IMR-90 (cell line): ENCODE measurements at regions of chr22 and their contacts with region 1.

Region 1: GRCh38 chr22:25202290-25202921 is 2.7 kb downstream of the CRYBB3 start:
- DNase-seq: peak; percentile 43
- ATAC-seq: peak; percentile 97
- H3K4me3 ChIP-seq: no peak overlapping the region
- H3K27ac ChIP-seq: no peak overlapping the region
- H3K4me1 ChIP-seq: no peaks in the 10 kb centered on the region
- H3K27me3 ChIP-seq: no peaks in the 10 kb centered on the region
- CTCF ChIP-seq: peak; percentile 83
- POLR2A ChIP-seq: no peak
- RAD21 ChIP-seq: peak; percentile 72

Region 2: DNA sequence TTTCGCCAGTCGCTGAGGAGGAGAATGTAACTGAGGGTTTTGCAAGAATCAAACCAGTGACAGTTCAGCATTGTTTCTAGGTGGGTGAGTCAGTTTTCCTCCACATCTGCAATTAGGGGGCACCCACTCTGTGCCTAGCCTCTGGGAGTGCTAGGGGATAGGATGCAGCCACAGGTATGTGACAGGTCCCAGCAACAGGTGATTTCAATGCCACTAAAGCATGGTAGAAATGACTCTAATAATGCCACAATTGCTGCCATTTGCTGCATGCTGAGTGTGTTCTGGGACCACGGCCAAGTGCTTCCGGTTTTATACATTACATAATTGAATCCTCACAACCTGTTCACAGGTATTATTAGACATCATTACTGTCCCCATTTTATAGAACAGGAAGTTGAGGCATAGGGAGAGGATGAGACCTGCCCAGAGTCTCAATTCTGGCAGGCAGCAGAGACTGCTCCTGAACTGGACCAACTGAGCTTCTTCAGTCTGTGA is 17.6 kb after region 1 on chr22:
- CTCF ChIA-PET with region 1: no interaction called
- POLR2A ChIA-PET with region 1: no interaction called
- dilution Hi-C with region 1: no loop called
- in situ Hi-C with region 1: no loop called
- intact Hi-C with region 1: no loop called
- DNase-seq: no peak
- ATAC-seq: no peak
- H3K4me3 ChIP-seq: no peak overlapping the region
- H3K27ac ChIP-seq: no peak overlapping the region
- H3K4me1 ChIP-seq: no peaks in the 10 kb centered on the region
- H3K27me3 ChIP-seq: no peaks in the 10 kb centered on the region; the same call in 1 of the 2 replicates
- CTCF ChIP-seq: no peak
- POLR2A ChIP-seq: no peak
- RAD21 ChIP-seq: no peak

Region 3: DNA sequence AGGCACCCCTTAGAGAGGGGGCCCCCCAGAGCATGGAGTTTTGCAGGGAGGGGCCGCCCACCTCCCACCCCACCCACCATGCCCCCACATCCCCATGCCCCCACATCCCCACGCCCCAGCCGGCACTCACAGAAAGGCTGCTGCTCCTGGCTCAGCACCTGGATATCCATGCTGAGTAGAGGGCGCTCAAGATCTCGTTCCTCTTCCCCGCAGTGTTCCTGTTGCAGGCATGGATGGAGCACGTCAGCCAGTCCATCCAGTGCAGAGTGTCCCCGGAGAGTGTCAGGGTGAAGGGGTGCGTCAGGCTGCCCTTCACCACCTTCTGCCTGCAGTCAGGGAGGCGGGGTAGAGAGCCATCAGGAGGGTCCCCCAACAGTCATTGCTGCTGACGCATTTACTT is 173.3 kb after region 1 on chr22:
- CTCF ChIA-PET with region 1: no interaction called
- POLR2A ChIA-PET with region 1: no interaction called
- dilution Hi-C with region 1: no loop called
- in situ Hi-C with region 1: no loop called
- intact Hi-C with region 1: no loop called
- DNase-seq: no peak
- ATAC-seq: no peak
- H3K4me3 ChIP-seq: no peak overlapping the region
- H3K27ac ChIP-seq: no peak overlapping the region
- H3K4me1 ChIP-seq: no peaks in the 10 kb centered on the region
- H3K27me3 ChIP-seq: no peaks in the 10 kb centered on the region
- CTCF ChIP-seq: no peak
- POLR2A ChIP-seq: no peak
- RAD21 ChIP-seq: no peak

Region 4: DNA sequence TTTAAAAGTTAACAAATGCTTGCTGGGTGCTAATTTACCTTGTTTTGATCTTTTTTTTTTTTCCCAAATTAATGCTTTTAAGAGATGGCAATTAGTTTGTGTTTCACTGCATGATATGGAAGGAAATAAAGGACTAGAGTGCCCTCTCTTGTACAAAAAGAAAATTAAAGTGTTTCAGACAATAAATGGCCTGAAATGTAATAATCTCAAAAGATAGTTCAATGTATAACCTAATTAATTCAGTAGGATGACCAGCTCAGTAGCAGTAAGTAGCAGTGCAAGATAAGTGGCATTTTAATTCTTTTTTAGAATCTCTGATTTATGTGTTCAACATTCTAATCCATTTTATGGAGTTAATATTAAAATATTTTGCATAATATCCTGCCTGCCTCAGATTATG is 499.6 kb after region 1 on chr22:
- CTCF ChIA-PET with region 1: no interaction called
- POLR2A ChIA-PET with region 1: no interaction called
- dilution Hi-C with region 1: no loop called
- in situ Hi-C with region 1: no loop called
- intact Hi-C with region 1: loop called (anchors 1 kb)
- DNase-seq: peak; percentile 29
- ATAC-seq: peak; percentile 56; the same call in 1 of the 2 replicates
- H3K4me3 ChIP-seq: no peak overlapping the region
- H3K27ac ChIP-seq: no peak overlapping the region
- H3K4me1 ChIP-seq: no peaks in the 10 kb centered on the region
- H3K27me3 ChIP-seq: no peaks in the 10 kb centered on the region
- CTCF ChIP-seq: peak; percentile 62
- POLR2A ChIP-seq: no peak
- RAD21 ChIP-seq: peak; percentile 68

Region 5: GRCh38 chr22:25777870-25778269 is 575.5 kb after region 1 on chr22:
- CTCF ChIA-PET with region 1: no interaction called
- POLR2A ChIA-PET with region 1: no interaction called
- dilution Hi-C with region 1: no loop called
- in situ Hi-C with region 1: no loop called
- intact Hi-C with region 1: loop called (anchors 1 kb)
- DNase-seq: peak; percentile 45
- ATAC-seq: peak; percentile 64
- H3K4me3 ChIP-seq: no peak overlapping the region
- H3K27ac ChIP-seq: no peak overlapping the region
- H3K4me1 ChIP-seq: no peaks in the 10 kb centered on the region
- H3K27me3 ChIP-seq: peaks cover 2% of the 10 kb centered on the region; the same call in 1 of the 2 replicates
- CTCF ChIP-seq: peak; percentile 38
- POLR2A ChIP-seq: no peak
- RAD21 ChIP-seq: peak; percentile 40; the same call in 1 of the 2 replicates

Region 6: DNA sequence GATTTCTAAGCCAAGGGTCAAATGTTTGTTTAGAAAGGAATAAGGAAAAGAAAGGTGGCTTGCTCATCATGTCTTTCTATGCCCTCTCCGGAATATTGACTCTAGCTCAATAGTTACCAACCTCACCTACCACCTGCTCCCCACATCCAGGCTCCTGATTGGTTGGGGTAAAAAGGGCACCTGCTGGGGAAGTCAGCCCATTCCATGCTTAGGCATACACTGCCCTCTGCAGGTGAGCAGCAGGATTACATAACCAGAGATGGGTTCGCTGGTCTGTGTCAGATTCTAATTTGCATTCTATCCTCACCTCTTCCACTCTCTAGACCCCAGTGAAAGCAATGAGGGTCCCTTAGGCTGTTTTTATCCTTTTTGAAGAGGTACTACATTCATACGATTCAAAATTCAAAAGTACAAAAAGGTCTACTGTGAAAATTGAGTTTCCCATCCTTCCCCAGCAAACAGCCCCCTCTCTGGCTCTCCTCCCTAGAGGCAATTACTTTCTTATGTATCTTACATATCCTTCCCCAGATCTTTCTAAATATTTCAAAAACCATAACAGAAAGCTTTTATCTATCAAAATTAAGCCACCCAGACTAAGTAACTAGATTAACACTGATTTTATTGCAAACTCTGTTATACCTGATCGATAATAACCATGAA is 1128.7 kb after region 1 on chr22:
- CTCF ChIA-PET with region 1: no interaction called
- POLR2A ChIA-PET with region 1: no interaction called
- dilution Hi-C with region 1: no loop called
- in situ Hi-C with region 1: no loop called
- intact Hi-C with region 1: loop called (anchors 5 kb)
- DNase-seq: peak; percentile 23
- ATAC-seq: peak; percentile 86
- H3K4me3 ChIP-seq: no peak overlapping the region
- H3K27ac ChIP-seq: no peak overlapping the region
- H3K4me1 ChIP-seq: no peaks in the 10 kb centered on the region
- H3K27me3 ChIP-seq: peaks cover 5% of the 10 kb centered on the region; the same call in 1 of the 2 replicates
- CTCF ChIP-seq: peak; percentile 81
- POLR2A ChIP-seq: no peak
- RAD21 ChIP-seq: peak; percentile 88

Region 7: DNA sequence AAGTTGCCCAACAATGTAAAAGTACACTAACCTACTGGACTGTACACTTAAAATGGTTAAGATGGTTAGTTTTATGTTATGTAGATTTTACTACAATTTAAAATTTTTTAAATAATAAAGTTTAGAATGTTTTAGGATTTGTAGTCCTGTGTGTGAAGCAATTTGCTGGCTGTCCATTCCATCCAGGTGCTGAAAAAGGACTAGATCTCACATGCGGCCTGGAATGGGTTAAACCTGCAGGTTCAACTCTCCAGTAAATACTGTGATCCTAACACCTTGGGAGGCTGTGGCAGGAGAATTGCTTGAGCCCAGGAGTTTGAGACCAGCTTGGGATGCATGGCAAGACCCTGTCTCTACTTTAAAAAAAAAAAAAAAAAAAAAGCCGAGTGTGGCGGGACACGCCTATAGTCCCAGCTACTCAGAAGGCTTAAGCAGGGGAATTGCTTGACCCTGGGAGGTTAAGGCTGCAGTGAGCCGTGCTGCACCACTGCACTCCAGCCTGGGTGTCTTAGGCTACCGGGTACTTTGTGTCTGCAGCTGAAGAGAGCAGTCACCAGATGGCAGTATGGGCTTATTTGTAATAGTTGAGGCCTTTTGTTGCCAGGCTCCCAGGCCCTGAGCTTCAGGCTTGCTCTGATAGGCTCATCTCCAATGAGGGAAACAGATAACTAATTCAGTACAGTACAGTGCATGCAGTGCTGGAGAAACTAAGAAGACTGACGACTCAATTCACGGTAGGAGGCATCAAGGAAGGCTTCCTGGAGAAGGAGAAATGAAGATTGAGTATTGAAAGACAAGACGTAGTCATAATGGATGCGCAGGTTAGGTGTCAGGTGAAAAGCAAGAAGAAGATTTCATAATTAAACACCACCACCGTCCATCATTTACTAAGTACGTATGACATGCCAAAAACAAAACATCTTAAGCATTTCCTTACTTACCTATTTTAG is 1161.9 kb after region 1 on chr22:
- CTCF ChIA-PET with region 1: no interaction called
- POLR2A ChIA-PET with region 1: no interaction called
- dilution Hi-C with region 1: no loop called
- in situ Hi-C with region 1: no loop called
- intact Hi-C with region 1: loop called (anchors 2 kb)
- DNase-seq: peak; percentile 80
- ATAC-seq: peak; percentile 92
- H3K4me3 ChIP-seq: no peak overlapping the region
- H3K27ac ChIP-seq: no peak overlapping the region
- H3K4me1 ChIP-seq: no peaks in the 10 kb centered on the region
- H3K27me3 ChIP-seq: peaks cover 4% of the 10 kb centered on the region; the same call in 1 of the 2 replicates
- CTCF ChIP-seq: peak; percentile 73
- POLR2A ChIP-seq: no peak
- RAD21 ChIP-seq: peak; percentile 74